ENCODE measurements at regions of chr5 and their contacts with region 1.

Region 1: GRCh38 chr5:32027717-32028321 is 146.3 kb downstream of the GOLPH3 start:
- DNase-seq: peak; percentile 98
- H3K4me3 Mint-ChIP-seq: peak overlapping the region; percentile 38
- H3K27ac Mint-ChIP-seq: peak overlapping the region; percentile 86
- H3K4me1 Mint-ChIP-seq: peaks cover 54% of the 10 kb centered on the region
- H3K27me3 Mint-ChIP-seq: no peaks in the 10 kb centered on the region
- CTCF ChIP-seq: no peak

Region 2: DNA sequence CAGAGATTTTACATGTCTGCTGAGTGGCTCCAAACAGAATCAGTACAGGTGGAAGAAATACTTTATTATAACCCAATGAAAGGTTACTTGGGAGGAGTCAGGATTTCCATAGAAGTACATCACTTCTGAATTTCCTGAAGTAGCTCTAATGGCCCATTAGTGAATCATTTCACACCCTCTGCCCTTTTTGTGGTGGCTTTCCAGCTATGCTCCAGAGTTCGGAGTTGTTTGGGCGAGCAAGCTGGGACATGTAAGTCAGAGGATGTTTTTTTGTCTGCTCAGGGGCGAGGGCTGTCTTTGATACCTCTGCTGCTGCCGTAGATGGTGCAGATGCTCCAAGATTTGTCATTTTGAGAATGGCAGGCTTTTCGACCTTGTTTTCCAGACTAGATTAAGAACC is 79.8 kb before region 1 on chr5:
- CTCF ChIA-PET with region 1: interaction called, 4 read pairs
- POLR2A ChIA-PET with region 1: interaction called, 12 read pairs
- intact Hi-C with region 1: no loop called
- DNase-seq: peak; percentile 83
- H3K4me3 Mint-ChIP-seq: peak overlapping the region; percentile 38
- H3K27ac Mint-ChIP-seq: peak overlapping the region; percentile 91
- H3K4me1 Mint-ChIP-seq: peaks cover 20% of the 10 kb centered on the region
- H3K27me3 Mint-ChIP-seq: no peaks in the 10 kb centered on the region
- CTCF ChIP-seq: no peak

Region 3: DNA sequence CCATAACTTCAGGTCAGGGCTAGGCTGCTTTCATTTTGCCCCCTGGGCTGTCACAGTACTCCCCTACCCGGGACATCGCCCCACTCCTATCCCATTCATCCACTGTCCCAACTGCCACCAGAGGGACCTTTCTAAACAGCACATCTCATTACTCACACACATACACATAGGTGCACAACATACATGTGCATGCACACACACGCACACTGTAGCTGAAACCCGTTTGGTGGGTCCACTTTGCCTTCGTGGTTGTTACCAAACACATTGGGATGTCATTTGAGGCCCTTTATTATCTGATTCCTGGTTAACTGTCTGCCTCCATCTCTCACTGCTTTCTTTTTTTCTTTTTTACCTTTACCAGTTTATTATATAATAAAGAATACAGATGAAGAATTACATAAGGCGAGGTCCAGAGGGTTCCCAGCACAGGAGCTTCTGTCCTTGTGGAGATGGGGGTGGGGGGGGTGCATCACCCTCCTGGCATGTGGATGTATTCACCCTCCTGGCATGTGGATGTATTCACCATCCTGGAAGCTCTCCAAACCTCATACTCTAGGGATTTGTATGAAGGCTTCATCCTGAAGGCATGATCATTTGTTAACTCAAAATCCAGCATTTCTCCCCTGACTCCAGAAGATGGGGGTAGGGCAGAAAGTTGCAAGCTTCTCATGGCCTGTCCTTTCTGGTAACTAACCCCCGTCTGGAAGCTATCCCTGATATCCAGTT is 39.7 kb before region 1 on chr5:
- CTCF ChIA-PET with region 1: interaction called, 4 read pairs
- POLR2A ChIA-PET with region 1: interaction called, 5 read pairs
- intact Hi-C with region 1: loop called (anchors 5 kb)
- DNase-seq: peak; percentile 98
- H3K4me3 Mint-ChIP-seq: no peak overlapping the region
- H3K27ac Mint-ChIP-seq: peak overlapping the region; percentile 20
- H3K4me1 Mint-ChIP-seq: peaks cover 36% of the 10 kb centered on the region
- H3K27me3 Mint-ChIP-seq: no peaks in the 10 kb centered on the region
- CTCF ChIP-seq: no peak

Region 4: DNA sequence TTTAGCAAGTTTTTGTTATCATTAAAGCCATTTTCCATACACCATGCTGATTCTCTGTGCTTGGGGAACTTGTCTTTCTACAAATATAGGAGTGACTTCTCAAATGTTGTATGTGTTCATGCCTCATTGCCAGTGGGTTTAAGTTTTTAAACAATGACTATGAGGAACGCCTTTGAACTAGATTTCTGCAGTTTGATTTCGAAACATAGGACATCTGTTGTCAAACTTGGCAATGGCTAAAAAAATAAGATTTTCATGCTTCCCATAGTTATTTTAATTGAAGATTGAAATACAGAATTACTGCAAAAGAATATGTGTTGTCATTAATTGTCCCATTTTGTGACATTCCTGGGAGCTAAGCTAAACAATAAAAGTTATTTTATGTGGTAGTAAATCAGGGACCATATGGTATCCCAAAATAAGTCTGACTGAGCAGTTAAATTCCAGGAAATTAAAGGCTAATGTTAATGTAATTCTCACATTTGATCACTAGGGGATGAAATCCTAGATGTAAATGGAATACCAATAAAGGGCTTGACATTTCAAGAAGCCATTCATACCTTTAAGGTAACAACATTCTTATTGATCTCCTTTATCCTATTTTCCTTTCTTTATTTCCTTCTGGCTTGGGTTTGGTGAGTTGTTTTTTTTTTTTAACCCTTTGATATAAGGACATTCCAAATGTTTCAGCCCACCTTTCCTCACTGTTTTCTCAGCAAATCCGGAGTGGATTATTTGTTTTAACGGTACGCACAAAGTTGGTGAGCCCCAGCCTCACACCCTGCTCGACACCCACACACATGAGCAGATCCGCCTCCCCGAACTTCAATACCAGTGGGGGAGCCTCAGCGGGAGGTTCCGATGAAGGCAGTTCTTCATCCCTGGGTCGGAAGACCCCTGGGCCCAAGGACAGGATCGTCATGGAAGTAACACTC is 29.6 kb after region 1 on chr5:
- CTCF ChIA-PET with region 1: interaction called, 3 read pairs
- POLR2A ChIA-PET with region 1: interaction called, 18 read pairs
- intact Hi-C with region 1: loop called (anchors 2 kb)
- DNase-seq: peak; percentile 53
- H3K4me3 Mint-ChIP-seq: no peak overlapping the region
- H3K27ac Mint-ChIP-seq: peak overlapping the region; percentile 88
- H3K4me1 Mint-ChIP-seq: peaks cover 28% of the 10 kb centered on the region
- H3K27me3 Mint-ChIP-seq: no peaks in the 10 kb centered on the region
- CTCF ChIP-seq: peak; percentile 31